Breast epithelium (tissue), 4 donors: ENCODE measurements at regions of chr20 and their contacts with region 1.

Region 1: GRCh38 chr20:20304942-20305341 is 63.0 kb upstream of the INSM1 start:
- DNase-seq: no peak
- H3K4me3 ChIP-seq: no peak overlapping the region
- H3K27ac ChIP-seq: no peak overlapping the region
- H3K4me1 ChIP-seq: no peaks in the 10 kb centered on the region
- H3K27me3 ChIP-seq: no peaks in the 10 kb centered on the region
- CTCF ChIP-seq: no peak
- POLR2A ChIP-seq: no peak

Region 2: DNA sequence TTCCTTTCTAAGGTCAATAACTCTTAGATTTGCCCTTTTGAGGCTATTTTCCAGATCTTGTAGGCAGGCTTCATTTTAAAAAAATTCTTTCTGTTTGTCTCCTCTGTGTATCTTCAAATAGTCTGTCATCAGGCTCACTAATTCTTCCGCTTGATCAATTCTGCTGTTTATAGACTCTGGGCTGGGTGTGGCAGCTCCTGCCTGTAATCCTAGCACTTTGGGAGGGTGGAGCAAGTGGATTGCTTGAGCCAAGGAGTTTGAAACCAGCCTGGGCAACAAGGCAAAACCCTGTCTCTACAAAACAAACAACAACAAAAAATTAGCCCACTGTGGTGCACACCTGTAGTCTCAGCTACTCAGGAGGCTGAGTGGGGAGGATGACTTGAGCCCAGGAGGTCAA is 1531.4 kb before region 1 on chr20:
- intact Hi-C with region 1: loop called (anchors 5 kb)
- DNase-seq: no peak
- H3K4me3 ChIP-seq: no peak overlapping the region
- H3K27ac ChIP-seq: no peak overlapping the region
- H3K4me1 ChIP-seq: no peaks in the 10 kb centered on the region
- H3K27me3 ChIP-seq: no peaks in the 10 kb centered on the region
- CTCF ChIP-seq: no peak
- POLR2A ChIP-seq: no peak

Region 3: DNA sequence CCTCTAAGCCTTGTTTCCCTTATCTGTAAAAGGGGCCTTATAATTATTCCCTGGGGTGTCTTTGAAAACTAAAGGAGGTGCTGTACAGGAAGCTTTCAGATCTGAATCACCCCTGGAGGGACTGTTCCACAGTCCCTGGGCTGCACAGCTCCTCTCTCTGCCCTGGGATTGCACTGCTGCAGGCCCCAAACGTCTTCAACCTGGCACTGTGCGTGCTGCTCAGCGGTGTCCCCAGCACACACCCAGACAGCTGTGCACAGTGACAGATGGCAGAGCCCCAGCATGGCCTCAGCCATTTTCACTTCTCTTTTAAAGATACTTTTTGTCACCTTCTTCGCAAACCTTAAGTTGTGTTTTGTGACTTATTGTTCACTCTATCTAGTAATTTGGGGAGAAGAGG is 12.3 kb after region 1 on chr20:
- intact Hi-C with region 1: no loop called
- DNase-seq: no peak
- H3K4me3 ChIP-seq: no peak overlapping the region
- H3K27ac ChIP-seq: no peak overlapping the region
- H3K4me1 ChIP-seq: no peaks in the 10 kb centered on the region
- H3K27me3 ChIP-seq: no peaks in the 10 kb centered on the region
- CTCF ChIP-seq: no peak
- POLR2A ChIP-seq: no peak